ENCODE measurements at regions of chr11 and their contacts with region 1.

Region 1: DNA sequence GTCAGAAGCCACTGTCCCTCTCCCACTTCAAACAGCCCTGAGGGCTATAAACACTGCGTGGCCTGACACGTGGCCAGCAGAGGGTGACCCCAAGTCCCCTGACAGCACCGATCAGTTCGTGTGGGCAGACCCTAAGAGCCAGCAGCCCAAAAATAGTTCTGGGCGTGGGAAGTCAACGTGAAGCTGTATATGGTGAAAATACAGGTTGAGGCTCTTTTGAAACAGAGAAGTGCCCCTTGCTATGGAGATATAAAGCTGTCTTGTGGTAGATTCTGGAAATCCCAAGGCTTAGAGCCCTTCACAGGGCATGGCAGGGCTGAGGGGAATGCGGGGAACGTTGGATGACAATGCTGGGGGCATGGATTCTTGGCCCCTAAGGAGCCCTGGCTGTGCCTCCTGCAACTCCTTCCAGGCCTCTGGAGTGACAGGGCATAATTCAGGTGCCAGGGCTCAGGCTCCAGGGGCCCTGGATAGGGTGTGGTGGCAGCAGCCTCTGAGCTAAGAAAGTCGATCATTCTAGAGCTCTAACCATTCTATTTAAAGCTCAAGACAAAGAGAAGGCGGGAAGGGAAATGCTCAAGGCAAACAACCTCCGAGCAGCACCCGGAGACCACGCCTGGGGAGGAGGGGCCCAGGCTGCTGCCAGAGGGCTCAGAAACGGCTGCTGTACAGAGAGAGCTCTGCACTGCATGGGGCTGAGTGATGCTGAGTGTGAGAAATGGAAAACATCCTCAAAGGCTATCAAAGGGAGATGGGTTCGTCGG is 60.4 kb upstream of the CD5 start:
- DNase-seq: peak; percentile 32
- H3K4me3 Mint-ChIP-seq: no peak overlapping the region
- H3K27ac Mint-ChIP-seq: no peak overlapping the region
- H3K4me1 Mint-ChIP-seq: no peaks in the 10 kb centered on the region
- H3K27me3 Mint-ChIP-seq: peaks cover 6% of the 10 kb centered on the region
- CTCF ChIP-seq: no peak

Region 2: GRCh38 chr11:60855726-60856633 is 186.0 kb before region 1 on chr11 and contains the start of gene PTGDR2:
- CTCF ChIA-PET with region 1: interaction called, 11 read pairs
- intact Hi-C with region 1: no loop called
- DNase-seq: no peak
- H3K4me3 Mint-ChIP-seq: no peak within 1 kb of the TSS
- H3K27ac Mint-ChIP-seq: no peak within 1 kb of the TSS
- H3K4me1 Mint-ChIP-seq: peaks cover 9% of the 10 kb centered on the region
- H3K27me3 Mint-ChIP-seq: peaks cover 24% of the 10 kb centered on the region
- CTCF ChIP-seq: no peak
- total RNA-seq, gene PTGDR2: 0.29 and 0.31 TPM in 2 replicates

Region 3: GRCh38 chr11:60872961-60873524 is 168.9 kb before region 1 on chr11:
- CTCF ChIA-PET with region 1: no interaction called
- intact Hi-C with region 1: no loop called
- DNase-seq: no peak
- H3K4me3 Mint-ChIP-seq: no peak overlapping the region
- H3K27ac Mint-ChIP-seq: no peak overlapping the region
- H3K4me1 Mint-ChIP-seq: no peaks in the 10 kb centered on the region
- H3K27me3 Mint-ChIP-seq: no peaks in the 10 kb centered on the region
- CTCF ChIP-seq: no peak

Measured in Calu3 (cell line).